Endothelial cell of umbilical vein (primary cell): ENCODE measurements at regions of chr12 and their contacts with region 1.

Region 1: GRCh38 chr12:63068857-63069442 is 82.1 kb downstream of the AVPR1A start:
- DNase-seq: peak; percentile 80
- H3K4me3 ChIP-seq: no peak overlapping the region
- H3K27ac ChIP-seq: no peak overlapping the region
- H3K4me1 ChIP-seq: no peaks in the 10 kb centered on the region
- H3K27me3 ChIP-seq: peaks cover 2% of the 10 kb centered on the region in 2 experiments
- CTCF ChIP-seq: peak; percentile 29 to 35
- POLR2A ChIP-seq: no peak

Region 2: DNA sequence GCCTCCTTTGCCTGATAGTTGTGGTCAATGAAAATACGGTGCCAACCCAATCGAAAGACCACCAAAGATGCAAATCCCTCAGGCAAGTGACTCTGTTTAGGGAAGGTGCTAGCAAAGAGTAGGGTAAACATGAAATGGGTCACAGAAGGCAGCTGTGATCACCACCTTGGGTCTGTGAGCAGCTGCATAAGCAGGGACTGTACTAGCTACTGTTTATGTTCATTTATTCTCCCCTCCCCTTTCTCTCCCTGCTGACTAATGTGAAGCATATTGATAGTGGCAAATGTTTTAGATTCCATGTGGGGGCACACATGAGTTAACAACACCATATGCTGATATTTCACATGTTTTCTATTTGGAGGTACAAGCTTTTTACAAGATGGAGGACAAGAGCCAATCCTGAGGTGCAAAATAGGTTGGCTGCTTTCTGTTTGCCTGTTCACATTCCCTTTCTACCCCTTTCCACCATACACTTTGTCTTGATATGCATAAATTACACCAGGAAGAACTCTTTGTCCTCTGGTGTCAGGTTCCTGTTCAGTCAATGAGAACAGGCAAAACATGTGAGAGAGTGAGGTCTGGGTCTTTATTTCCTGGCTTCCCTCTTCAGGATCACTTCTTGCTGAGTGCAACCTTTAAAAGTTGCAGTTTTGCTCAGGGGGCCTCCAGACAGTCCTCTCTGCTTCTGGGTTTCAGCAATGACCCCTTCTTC is 11.0 kb after region 1 on chr12:
- CTCF ChIA-PET with region 1: interaction called, 11 read pairs
- POLR2A ChIA-PET with region 1: no interaction called
- dilution Hi-C with region 1: no loop called
- intact Hi-C with region 1: no loop called
- DNase-seq: no peak
- H3K4me3 ChIP-seq: no peak overlapping the region
- H3K27ac ChIP-seq: no peak overlapping the region
- H3K4me1 ChIP-seq: no peaks in the 10 kb centered on the region
- H3K27me3 ChIP-seq: peaks cover 3 to 6% of the 10 kb centered on the region in 2 experiments
- CTCF ChIP-seq: no peak
- POLR2A ChIP-seq: no peak